ENCODE measurements at regions of chr12 and their contacts with region 1.

Region 1: GRCh38 chr12:30695199-30696103 is at the start of gene IPO8:
- DNase-seq: peak; percentile 94 to 96
- ATAC-seq: peak; percentile 89 to 94 (median 93)
- H3K4me3 ChIP-seq: peak within 1 kb of the TSS; percentile 88
- H3K27ac ChIP-seq: peak within 1 kb of the TSS; percentile 84
- H3K4me1 ChIP-seq: peaks cover 43% of the 10 kb centered on the region
- H3K27me3 ChIP-seq: no peaks in the 10 kb centered on the region
- CTCF ChIP-seq: peak; percentile 26
- total RNA-seq, gene IPO8: 22.8 to 37.2 (median 28.9) TPM

Region 2: GRCh38 chr12:29807125-29807524 is 888.3 kb before region 1 on chr12:
- intact Hi-C with region 1: no loop called
- DNase-seq: no peak
- ATAC-seq: peak in 3 of 4 donors; percentile 61 to 89 (median 87)
- H3K4me3 ChIP-seq: no peak overlapping the region
- H3K27ac ChIP-seq: peak overlapping the region; percentile 4
- H3K4me1 ChIP-seq: no peaks in the 10 kb centered on the region
- H3K27me3 ChIP-seq: no peaks in the 10 kb centered on the region
- CTCF ChIP-seq: no peak

Region 3: DNA sequence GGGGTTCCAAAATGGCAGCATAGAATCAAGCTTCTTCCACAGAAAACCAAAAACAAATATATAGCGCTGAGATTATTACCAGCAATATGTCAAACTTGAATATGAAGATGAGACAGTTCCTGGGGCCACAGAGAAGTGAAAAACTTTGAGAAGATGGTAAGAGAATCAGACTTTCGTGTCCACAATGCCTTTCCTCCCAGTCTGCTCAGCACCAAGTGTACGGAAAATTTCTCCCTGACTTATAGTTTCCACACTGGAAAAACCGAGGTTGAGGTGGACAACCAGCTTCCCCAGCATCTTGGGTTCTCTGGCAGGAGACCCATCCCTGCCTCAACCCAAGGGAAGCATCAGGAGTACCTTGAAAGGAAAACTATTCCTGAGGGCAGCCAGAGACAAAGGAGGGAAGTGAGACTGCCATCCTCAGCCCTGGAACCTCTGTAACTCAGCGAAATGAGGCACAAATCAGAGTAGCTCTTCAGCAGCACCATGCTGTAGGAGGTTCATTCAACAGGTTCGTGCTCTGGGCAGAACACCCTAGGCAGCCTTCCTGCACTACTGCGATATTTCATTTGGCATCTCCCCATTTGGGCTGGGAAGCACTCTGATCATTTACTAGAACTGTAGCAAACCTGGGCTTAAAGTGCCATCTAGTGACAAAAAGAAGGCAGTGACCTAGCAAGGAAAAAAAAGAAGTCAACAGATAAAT is 111.7 kb after region 1 on chr12:
- intact Hi-C with region 1: loop called in 1 of 2 experiments (anchors 5 kb)
- DNase-seq: no peak
- ATAC-seq: peak; percentile 82 to 97 (median 88)
- H3K4me3 ChIP-seq: peak overlapping the region; percentile 4
- H3K27ac ChIP-seq: no peak overlapping the region
- H3K4me1 ChIP-seq: no peaks in the 10 kb centered on the region
- H3K27me3 ChIP-seq: no peaks in the 10 kb centered on the region
- CTCF ChIP-seq: peak; percentile 79

Region 4: DNA sequence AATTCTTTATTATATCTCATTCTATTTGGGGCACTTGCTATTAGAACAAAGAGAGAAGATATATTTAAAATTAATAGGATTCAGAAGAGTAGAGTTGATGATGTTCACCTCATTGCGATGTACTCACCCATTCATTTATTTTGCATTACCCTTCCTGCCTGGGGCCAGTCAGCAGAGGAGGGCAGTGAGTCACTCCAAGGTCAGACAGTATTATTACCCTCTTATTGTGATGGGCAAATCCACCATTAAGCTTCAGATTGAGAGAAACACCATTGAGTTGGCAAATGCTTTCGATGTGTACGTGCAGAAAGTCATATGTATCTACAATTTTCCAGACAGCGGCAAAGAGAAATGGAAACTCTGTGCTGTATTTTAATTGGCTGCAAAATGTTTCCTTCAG is 1545.4 kb after region 1 on chr12:
- intact Hi-C with region 1: no loop called
- DNase-seq: no peak
- ATAC-seq: no peak
- H3K4me3 ChIP-seq: no peak overlapping the region
- H3K27ac ChIP-seq: no peak overlapping the region
- H3K4me1 ChIP-seq: no peaks in the 10 kb centered on the region
- H3K27me3 ChIP-seq: no peaks in the 10 kb centered on the region
- CTCF ChIP-seq: no peak

Measured in psoas muscle (tissue), 8 donors.